ENCODE measurements at regions of chr11 and their contacts with region 1.

Region 1: GRCh38 chr11:60363542-60364510 is 14.5 kb upstream of the MS4A7 start:
- DNase-seq: no peak
- H3K4me3 ChIP-seq: no peak overlapping the region
- H3K27ac ChIP-seq: peak overlapping the region in 1 of 4 donors; percentile 45
- H3K4me1 ChIP-seq: no peaks in the 10 kb centered on the region
- H3K27me3 ChIP-seq: no peaks in the 10 kb centered on the region
- CTCF ChIP-seq: peak; percentile 57 to 69 (median 62)
- POLR2A ChIP-seq: no peak

Region 2: DNA sequence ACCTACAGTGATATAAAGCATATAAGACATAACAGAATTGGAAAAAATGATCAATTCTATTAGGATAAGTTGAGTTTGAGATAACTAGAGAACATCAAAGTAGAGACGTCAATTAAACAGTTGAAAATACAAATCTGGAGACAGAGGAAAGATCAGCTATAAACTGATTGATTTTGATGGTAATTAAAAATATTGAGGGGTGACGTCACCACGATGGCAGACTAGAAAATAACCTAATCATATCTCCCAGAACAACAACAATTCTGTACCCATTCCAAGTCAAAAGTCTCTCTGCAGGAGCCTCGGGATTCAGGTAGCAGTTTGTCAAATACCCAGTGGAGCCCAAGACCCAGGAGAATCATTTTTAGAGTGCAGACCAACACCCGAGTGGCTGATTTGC is 180.2 kb after region 1 on chr11:
- intact Hi-C with region 1: no loop called
- DNase-seq: no peak
- H3K4me3 ChIP-seq: no peak overlapping the region
- H3K27ac ChIP-seq: no peak overlapping the region
- H3K4me1 ChIP-seq: no peaks in the 10 kb centered on the region
- H3K27me3 ChIP-seq: no peaks in the 10 kb centered on the region
- CTCF ChIP-seq: no peak
- POLR2A ChIP-seq: no peak

Region 3: GRCh38 chr11:60615497-60615896 is 251.7 kb after region 1 on chr11:
- intact Hi-C with region 1: loop called (anchors 10 kb)
- DNase-seq: no peak
- H3K4me3 ChIP-seq: no peak overlapping the region
- H3K27ac ChIP-seq: no peak overlapping the region
- H3K4me1 ChIP-seq: no peaks in the 10 kb centered on the region
- H3K27me3 ChIP-seq: no peaks in the 10 kb centered on the region
- CTCF ChIP-seq: no peak
- POLR2A ChIP-seq: no peak

Region 4: DNA sequence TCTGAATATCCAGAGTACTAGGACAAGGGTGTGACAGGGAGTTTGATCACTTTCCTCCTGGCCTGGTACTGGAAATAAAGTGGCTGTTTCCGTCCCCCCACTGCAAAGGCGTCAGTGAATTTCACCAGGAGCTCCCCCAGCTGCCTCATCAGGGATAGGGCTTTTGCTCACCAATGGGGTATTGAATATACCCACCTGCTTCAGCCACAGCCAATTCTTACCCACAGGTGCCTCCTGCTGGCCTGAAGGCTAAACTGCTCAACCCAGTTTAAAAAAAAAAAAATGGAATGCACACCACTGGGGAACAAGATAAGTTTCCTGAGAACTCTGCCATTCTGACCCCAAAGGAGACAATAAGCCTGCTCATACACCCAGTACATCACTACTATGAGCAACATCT is 270.3 kb after region 1 on chr11:
- intact Hi-C with region 1: loop called (anchors 5 kb)
- DNase-seq: no peak
- H3K4me3 ChIP-seq: no peak overlapping the region
- H3K27ac ChIP-seq: no peak overlapping the region
- H3K4me1 ChIP-seq: no peaks in the 10 kb centered on the region
- H3K27me3 ChIP-seq: no peaks in the 10 kb centered on the region
- CTCF ChIP-seq: peak in 1 of 6 experiments; percentile 6
- POLR2A ChIP-seq: no peak

Measured in esophagus squamous epithelium (tissue), 5 donors.